Ovary (tissue), 10 donors: ENCODE measurements at regions of chr3 and their contacts with region 1.

Region 1: DNA sequence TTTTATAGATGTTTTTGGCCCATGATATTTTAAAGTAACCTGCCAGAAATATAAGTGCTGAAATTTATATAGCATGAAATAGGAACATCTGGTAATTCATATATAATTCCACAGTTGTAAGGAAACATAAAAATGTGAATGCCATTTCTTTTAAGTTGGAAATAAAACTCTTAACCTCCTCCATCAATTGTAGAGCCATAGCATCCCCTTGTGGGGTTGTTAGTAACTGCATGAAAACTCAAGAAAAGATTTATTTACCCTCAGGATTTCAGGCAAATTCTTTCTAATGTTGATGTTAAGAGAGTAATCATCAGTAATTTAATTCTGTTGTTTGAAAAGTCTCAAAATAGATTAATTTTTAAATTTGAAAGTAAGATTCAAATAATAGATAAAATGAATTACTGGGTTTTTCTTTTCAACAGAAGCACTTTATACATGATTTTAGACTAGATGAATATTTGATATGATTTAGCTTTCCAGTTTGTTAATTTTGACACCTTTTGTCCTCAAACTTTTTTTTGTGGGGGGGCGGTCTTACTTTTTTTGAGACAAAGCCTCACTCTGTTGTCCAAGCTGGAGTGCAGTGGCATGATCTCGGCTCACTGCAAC is 74.7 kb downstream of the RASA2 start:
- DNase-seq: peak in 1 of 5 donors; percentile 38
- H3K4me3 ChIP-seq: no peak overlapping the region
- H3K27ac ChIP-seq: no peak overlapping the region
- H3K4me1 ChIP-seq: no peaks in the 10 kb centered on the region
- H3K27me3 ChIP-seq: no peaks in the 10 kb centered on the region
- CTCF ChIP-seq: peak; percentile 78 to 99 (median 96)
- EP300 ChIP-seq: no peak
- POLR2A ChIP-seq: no peak

Region 2: DNA sequence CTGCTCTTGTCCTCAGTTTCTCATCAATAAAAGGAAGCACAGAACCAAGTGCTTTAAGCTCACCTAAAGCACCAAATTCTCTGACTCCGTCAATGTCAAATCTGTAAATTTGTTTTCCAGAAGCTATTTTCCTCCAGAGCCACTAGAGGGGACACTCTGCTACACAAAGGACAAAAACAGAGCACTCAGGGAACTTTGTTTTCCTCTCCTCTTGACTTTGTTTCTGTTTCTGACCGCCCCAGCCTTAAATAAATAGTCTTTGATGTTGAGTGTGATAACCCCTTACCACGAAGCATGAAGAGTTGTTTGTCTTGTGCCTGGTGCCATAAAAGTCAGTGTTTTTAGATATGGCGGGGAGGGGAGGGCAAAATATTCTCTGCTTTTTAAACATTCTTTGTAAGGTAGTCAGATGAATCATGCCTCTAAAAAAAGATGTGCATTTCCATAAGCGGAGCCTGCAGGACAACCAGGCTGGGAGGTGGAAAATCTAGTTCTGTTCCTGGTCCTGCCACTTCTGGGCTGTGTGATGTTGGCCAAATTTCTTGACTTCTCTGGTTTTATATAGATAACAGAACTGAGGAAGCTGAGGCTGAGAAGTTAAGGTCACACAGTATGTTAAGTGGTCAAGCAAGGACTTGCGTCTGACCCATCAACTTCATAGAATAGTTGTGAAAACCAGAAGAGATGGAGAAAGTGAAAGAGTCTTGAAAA is 200.5 kb before region 1 on chr3:
- intact Hi-C with region 1: loop called in 1 of 4 experiments (anchors 2 kb)
- DNase-seq: peak in 1 of 5 donors; percentile 31
- H3K4me3 ChIP-seq: no peak overlapping the region
- H3K27ac ChIP-seq: no peak overlapping the region
- H3K4me1 ChIP-seq: peaks cover 2% of the 10 kb centered on the region
- H3K27me3 ChIP-seq: no peaks in the 10 kb centered on the region
- CTCF ChIP-seq: peak; percentile 62 to 85 (median 80)
- EP300 ChIP-seq: no peak
- POLR2A ChIP-seq: no peak

Region 3: DNA sequence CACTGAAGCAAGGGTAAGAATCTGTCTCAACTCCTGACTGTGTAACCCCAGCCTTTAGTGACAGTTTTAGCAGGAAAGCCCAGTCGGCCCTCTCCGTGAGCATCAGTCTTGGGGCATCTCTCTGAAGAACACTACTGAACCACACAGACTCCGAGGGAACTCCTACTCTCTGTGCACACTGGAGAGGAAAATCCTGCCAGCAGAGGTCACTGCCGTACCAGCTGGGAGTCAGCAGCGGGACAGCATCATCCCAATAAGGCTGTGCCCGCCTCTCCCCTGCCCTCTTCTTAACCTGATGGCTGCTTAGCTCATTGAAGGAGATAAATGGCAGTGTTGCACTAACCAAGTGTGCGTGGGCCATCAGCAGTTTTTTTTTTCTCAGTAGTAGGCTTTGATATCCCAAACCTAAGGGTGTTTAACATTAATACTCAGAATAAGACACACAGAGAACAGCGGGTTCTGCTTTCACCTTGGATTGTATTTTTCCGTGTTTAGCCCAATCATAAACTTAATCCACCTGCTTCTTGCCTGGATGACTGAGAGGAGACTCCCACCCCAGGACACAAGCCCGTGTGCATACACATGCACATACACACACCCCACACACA is 101.3 kb before region 1 on chr3:
- intact Hi-C with region 1: loop called (anchors 5 kb)
- DNase-seq: peak; percentile 84 to 92 (median 90)
- H3K4me3 ChIP-seq: no peak overlapping the region
- H3K27ac ChIP-seq: no peak overlapping the region
- H3K4me1 ChIP-seq: peaks cover 2% of the 10 kb centered on the region
- H3K27me3 ChIP-seq: no peaks in the 10 kb centered on the region
- CTCF ChIP-seq: peak; percentile 68 to 81 (median 75)
- EP300 ChIP-seq: no peak
- POLR2A ChIP-seq: no peak

Region 4: GRCh38 chr3:141471160-141471559 is 90.4 kb before region 1 on chr3:
- intact Hi-C with region 1: loop called in 2 of 4 experiments (anchors 5 kb)
- DNase-seq: no peak
- H3K4me3 ChIP-seq: no peak overlapping the region
- H3K27ac ChIP-seq: no peak overlapping the region
- H3K4me1 ChIP-seq: no peaks in the 10 kb centered on the region
- H3K27me3 ChIP-seq: no peaks in the 10 kb centered on the region
- CTCF ChIP-seq: no peak
- EP300 ChIP-seq: no peak
- POLR2A ChIP-seq: no peak

Region 5: DNA sequence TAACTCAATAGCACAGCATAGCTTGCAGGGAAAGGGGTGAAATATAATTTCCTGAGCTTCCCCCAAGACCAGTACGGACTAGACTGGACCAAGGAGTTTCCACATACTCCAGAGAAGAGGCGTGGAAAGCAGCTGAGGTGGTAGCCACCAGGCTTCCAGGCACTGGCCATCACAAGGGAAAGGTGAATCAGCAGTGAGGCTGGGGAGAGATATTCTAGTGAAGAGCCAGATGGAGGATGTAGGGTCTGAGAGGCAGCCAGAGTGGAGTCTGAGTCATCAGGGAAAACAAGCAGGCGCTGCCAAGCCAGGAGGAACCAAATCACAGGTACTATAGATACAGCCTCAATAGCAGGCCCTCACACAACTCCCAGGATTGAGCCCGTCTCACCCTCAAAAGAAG is 84.3 kb before region 1 on chr3:
- intact Hi-C with region 1: loop called in 2 of 4 experiments (anchors 5 kb)
- DNase-seq: no peak
- H3K4me3 ChIP-seq: no peak overlapping the region
- H3K27ac ChIP-seq: no peak overlapping the region
- H3K4me1 ChIP-seq: no peaks in the 10 kb centered on the region
- H3K27me3 ChIP-seq: no peaks in the 10 kb centered on the region
- CTCF ChIP-seq: no peak
- EP300 ChIP-seq: no peak
- POLR2A ChIP-seq: no peak

Region 6: GRCh38 chr3:141507392-141508066 is 54.0 kb before region 1 on chr3:
- intact Hi-C with region 1: no loop called
- DNase-seq: no peak
- H3K4me3 ChIP-seq: no peak overlapping the region
- H3K27ac ChIP-seq: no peak overlapping the region
- H3K4me1 ChIP-seq: peaks cover 2% of the 10 kb centered on the region
- H3K27me3 ChIP-seq: no peaks in the 10 kb centered on the region
- CTCF ChIP-seq: no peak
- EP300 ChIP-seq: no peak
- POLR2A ChIP-seq: no peak

Region 7: GRCh38 chr3:142628801-142629200 is 1067.3 kb after region 1 on chr3:
- intact Hi-C with region 1: no loop called
- DNase-seq: no peak
- H3K4me3 ChIP-seq: no peak overlapping the region
- H3K27ac ChIP-seq: no peak overlapping the region
- H3K4me1 ChIP-seq: no peaks in the 10 kb centered on the region
- H3K27me3 ChIP-seq: no peaks in the 10 kb centered on the region
- CTCF ChIP-seq: no peak
- EP300 ChIP-seq: no peak
- POLR2A ChIP-seq: no peak